Dendritic cell treated with granulocyte-macrophage colony-stimulating factor and Interleukin-4, amounts not matched to agents 40 ng/mL and 50 ng/mL, for 4 days (primary cell): ENCODE measurements at regions of chr15 and their contacts with region 1.

Region 1: DNA sequence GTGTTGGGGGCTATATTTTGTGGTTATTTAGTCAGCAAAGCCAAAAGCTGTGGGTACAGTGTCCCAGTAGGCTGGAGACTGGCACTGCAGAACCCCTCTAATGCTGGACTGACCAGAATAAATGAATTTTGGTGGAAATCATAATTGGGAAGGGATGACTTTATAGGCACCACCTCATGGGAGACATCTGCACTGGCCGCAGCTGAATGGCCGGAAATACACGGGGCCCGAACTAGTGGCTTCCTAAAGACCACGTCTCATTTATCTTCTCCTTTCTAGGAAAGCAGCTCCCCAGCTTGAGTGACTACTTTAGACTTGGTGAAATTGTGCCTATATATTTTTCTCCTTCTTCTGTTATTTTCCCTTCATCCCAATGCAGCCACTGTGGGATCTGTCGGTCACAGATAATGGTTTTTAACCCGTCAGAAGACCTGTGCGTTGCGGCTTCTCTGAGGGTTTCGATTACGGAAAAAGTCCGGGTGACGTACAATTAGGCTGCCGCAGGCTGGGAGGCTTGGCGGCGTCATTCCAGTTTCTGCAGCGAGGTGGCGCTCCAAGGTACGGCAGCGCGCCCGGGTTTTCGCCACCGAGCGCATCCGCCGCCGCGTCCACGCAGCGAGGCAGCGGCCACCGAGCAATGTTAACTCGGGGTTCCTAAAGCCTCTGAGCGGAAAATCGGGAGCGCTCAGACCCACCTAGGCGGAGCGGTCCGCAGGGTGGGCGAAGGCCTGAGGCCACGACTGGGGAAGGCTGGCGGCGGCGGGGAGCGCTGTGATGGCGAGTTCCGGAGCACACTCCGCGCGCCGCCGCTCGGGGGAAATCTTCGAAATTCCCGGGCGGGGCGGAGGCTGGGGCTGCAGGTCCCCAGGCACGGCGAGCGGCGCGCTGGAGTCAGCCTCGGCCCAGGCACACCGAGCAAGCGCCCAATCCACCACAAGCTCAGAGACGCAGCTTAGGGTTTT is 26.3 kb downstream of the NR2F2 start:
- H3K4me3 Mint-ChIP-seq: peak overlapping the region; percentile 77
- H3K27ac Mint-ChIP-seq: no peak overlapping the region
- H3K4me1 Mint-ChIP-seq: peaks cover 26% of the 10 kb centered on the region
- H3K27me3 Mint-ChIP-seq: peaks cover 36% of the 10 kb centered on the region

Region 2: GRCh38 chr15:96585484-96586386 is 229.0 kb after region 1 on chr15:
- intact Hi-C with region 1: loop called (anchors 10 kb)
- H3K4me3 Mint-ChIP-seq: no peak overlapping the region
- H3K27ac Mint-ChIP-seq: peak overlapping the region; percentile 81
- H3K4me1 Mint-ChIP-seq: peaks cover 40% of the 10 kb centered on the region
- H3K27me3 Mint-ChIP-seq: peaks cover 15% of the 10 kb centered on the region

Region 3: DNA sequence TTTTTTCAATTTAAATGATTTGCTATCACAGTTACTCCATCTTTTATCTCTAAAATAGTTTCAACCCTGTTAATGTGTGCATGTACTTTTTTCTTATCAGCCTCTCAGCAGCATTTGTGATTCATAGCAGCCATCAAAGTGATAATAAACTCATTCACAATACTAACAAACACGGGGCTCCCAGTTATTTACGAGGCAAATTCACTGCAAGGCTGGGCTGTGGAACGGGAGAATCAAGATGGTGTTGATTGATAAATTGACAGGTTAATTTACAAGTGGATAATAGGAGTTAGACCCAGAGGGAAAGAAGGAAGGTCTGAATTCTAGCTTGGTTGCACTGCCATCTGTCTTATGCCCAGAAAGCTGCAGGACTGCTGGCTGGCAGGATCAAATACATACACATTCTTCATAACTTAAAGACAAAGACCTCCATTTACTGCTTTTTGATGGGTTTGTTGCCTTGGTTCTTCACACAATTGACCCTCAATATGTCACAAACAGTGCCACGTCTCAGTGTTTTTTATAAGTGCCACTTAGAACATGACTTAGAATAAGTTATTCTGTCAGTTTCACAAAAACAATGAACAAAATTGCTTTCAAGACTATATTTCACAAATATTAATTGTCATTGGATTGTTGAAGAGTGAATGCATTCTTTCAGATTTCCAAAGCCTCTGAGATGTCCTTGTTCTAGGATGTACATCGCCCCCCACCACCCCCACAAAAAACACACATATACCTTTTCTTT is 536.6 kb after region 1 on chr15:
- intact Hi-C with region 1: loop called (anchors 1 kb)
- H3K4me3 Mint-ChIP-seq: no peak overlapping the region
- H3K27ac Mint-ChIP-seq: no peak overlapping the region
- H3K4me1 Mint-ChIP-seq: no peaks in the 10 kb centered on the region
- H3K27me3 Mint-ChIP-seq: peaks cover 4% of the 10 kb centered on the region

Region 4: DNA sequence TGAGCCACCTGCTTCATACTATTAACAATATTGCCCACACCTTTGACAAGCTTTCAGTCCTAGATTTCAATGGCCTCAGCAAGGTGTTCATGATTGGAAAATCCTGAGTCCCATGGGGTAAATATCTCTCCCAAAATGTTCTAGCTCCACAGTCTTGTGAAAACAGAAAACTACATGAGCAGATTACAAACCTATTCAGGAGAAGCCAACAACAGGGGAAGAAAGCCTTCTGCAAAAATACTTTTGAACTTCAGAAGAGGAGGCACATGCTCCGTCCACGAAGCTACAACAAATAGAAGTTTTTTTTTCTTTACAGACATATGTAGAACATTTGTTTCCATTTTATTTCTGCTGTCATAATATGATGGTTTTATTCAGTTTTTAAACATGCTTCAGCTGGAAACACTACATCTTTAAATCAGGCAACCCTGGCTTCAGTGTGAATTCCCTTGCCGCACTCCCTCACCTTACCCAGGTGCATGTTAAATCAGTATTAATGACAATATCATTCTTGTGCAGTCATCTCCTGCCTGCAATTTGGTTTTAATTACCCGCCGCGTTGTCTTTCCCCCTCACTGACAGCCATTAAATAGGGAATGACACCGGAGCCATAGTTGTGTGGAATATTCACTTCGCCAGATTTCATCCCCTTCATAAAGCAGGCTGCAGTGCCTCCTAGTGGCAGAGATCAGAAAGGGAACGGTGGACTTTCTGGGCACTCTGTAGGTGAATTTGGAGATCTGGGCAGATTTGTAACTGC is 878.3 kb after region 1 on chr15:
- intact Hi-C with region 1: loop called (anchors 2 kb)
- H3K4me3 Mint-ChIP-seq: no peak overlapping the region
- H3K27ac Mint-ChIP-seq: no peak overlapping the region
- H3K4me1 Mint-ChIP-seq: no peaks in the 10 kb centered on the region
- H3K27me3 Mint-ChIP-seq: no peaks in the 10 kb centered on the region

Region 5: GRCh38 chr15:97759363-97759762 is 1402.6 kb after region 1 on chr15:
- intact Hi-C with region 1: loop called (anchors 5 kb)
- H3K4me3 Mint-ChIP-seq: no peak overlapping the region
- H3K27ac Mint-ChIP-seq: no peak overlapping the region
- H3K4me1 Mint-ChIP-seq: peaks cover 6% of the 10 kb centered on the region
- H3K27me3 Mint-ChIP-seq: peaks cover 14% of the 10 kb centered on the region